CD4-positive, alpha-beta memory T cell (primary cell): ENCODE measurements at regions of chr10 and their contacts with region 1.

Region 1: DNA sequence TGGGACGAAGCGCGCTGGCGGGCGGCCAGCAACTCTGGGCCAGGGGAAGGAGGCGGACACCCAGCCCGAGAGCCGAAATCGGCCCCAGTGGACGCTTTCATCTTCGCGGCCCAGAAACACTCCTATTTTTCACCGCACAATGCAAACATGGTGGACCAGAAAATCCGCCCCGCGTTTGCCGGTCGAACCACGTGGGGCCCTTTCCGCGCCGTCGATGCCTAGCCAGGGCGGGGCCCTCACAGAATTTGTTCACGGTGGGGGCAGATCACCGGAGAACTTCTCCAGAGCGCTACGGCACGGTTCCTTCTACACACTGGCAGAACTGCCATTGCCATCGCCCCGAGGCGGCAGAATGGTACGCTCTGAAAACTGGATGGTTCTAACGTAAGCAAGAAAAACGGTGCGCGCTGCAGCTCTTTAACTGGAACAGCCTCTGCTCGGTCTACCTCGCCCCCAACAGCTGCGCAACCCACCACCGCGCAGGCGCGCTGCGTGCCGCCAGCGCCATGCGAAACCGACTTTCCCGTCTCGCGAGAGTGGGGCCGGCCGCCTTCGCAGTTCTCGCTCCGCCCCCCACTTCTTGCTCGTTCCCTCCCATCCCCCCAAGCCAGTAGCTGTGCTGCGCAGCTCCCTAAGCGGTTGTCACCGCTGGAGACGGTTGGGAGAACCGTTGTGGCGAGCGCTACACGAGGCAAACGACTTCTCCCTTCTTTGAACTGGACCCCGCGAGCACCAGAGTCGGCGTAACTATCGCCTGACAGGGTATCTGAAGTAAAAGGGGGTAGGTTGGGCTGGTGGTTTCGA is at the start of gene HNRNPH3:
- DNase-seq: peak; percentile 98 to 99 (median 99)
- H3K4me3 ChIP-seq: peak within 1 kb of the TSS; percentile 87 to 95
- H3K4me3 Mint-ChIP-seq: peak within 1 kb of the TSS; percentile 99 to 100 (median 100)
- H3K27ac ChIP-seq: peak within 1 kb of the TSS; percentile 96
- H3K27ac Mint-ChIP-seq: peak within 1 kb of the TSS; percentile 99 to 100 (median 100)
- H3K4me1 ChIP-seq: peaks cover 46% of the 10 kb centered on the region
- H3K4me1 Mint-ChIP-seq: peaks cover 30 to 70% (median 41%) of the 10 kb centered on the region in 4 donors
- H3K27me3 ChIP-seq: no peaks in the 10 kb centered on the region
- H3K27me3 Mint-ChIP-seq: no peaks in the 10 kb centered on the region
- total RNA-seq, gene HNRNPH3: 170 to 176 TPM

Region 2: DNA sequence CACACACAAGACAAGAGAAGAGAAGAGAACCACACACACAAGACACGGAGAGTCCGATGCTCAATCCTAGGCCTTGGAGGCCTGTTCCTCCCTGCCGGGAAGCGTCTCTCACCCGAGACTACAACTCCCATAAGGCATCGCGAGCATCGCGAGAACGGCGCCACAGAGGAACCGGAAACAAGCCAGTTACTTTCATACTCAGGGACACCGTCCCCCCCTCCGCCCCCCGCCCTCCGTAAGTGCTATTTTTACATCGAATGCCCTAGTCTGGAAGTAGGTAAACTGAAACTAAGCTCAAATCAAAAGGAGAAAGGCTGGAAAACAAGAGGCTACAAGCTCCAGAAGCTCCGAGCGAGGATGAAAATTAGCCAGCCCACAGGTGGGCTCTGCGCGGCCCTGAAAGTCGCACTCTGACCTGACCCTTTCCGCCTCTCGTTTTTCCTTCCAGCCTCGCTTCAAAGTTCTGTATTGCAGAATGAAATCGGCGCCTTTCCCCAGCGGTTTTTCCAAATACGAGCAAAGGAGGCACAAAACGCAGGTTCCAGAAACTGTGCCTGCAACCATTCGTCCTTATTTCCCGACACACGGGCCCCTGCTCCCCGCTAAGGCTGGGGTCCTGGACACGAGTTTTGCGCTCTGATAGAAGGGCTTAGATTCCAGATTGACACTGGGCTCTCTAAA is 482.2 kb before region 1 on chr10:
- CTCF ChIA-PET with region 1: no interaction called
- POLR2A ChIA-PET with region 1: interaction called, 20 read pairs
- intact Hi-C with region 1: loop called (anchors 1 kb)
- DNase-seq: peak; percentile 87 to 93 (median 90)
- H3K4me3 ChIP-seq: peak overlapping the region; percentile 70 to 98
- H3K4me3 Mint-ChIP-seq: peak overlapping the region; percentile 90 to 99 (median 96)
- H3K27ac ChIP-seq: peak overlapping the region; percentile 85
- H3K27ac Mint-ChIP-seq: peak overlapping the region; percentile 85 to 99 (median 97)
- H3K4me1 ChIP-seq: peaks cover 8% of the 10 kb centered on the region
- H3K4me1 Mint-ChIP-seq: peaks cover 2 to 17% (median 7%) of the 10 kb centered on the region in 4 donors
- H3K27me3 ChIP-seq: no peaks in the 10 kb centered on the region
- H3K27me3 Mint-ChIP-seq: no peaks in the 10 kb centered on the region

Region 3: GRCh38 chr10:68074775-68075549 is 256.7 kb before region 1 on chr10 and contains the start of gene HERC4:
- CTCF ChIA-PET with region 1: no interaction called
- POLR2A ChIA-PET with region 1: interaction called, 5 read pairs
- intact Hi-C with region 1: loop called (anchors 1 kb)
- DNase-seq: peak; percentile 88 to 92 (median 89)
- H3K4me3 ChIP-seq: peak within 1 kb of the TSS; percentile 53 to 99
- H3K4me3 Mint-ChIP-seq: peak within 1 kb of the TSS; percentile 95 to 99 (median 98)
- H3K27ac ChIP-seq: peak within 1 kb of the TSS; percentile 98
- H3K27ac Mint-ChIP-seq: peak within 1 kb of the TSS; percentile 91 to 98 (median 95)
- H3K4me1 ChIP-seq: peaks cover 39% of the 10 kb centered on the region
- H3K4me1 Mint-ChIP-seq: peaks cover 30 to 48% (median 39%) of the 10 kb centered on the region in 4 donors
- H3K27me3 ChIP-seq: no peaks in the 10 kb centered on the region
- H3K27me3 Mint-ChIP-seq: no peaks in the 10 kb centered on the region
- total RNA-seq, gene HERC4: 104 to 117 TPM

Region 4: GRCh38 chr10:68348265-68348741 is 16.6 kb after region 1 on chr10:
- CTCF ChIA-PET with region 1: interaction called, 39 read pairs
- POLR2A ChIA-PET with region 1: interaction called, 62 read pairs
- intact Hi-C with region 1: no loop called
- DNase-seq: peak; percentile 42 to 58 (median 49)
- H3K4me3 ChIP-seq: no peak overlapping the region
- H3K4me3 Mint-ChIP-seq: no peak overlapping the region
- H3K27ac ChIP-seq: no peak overlapping the region
- H3K27ac Mint-ChIP-seq: peak overlapping the region; percentile 4 to 85 (median 79)
- H3K4me1 ChIP-seq: no peaks in the 10 kb centered on the region
- H3K4me1 Mint-ChIP-seq: peaks cover 2 to 8% (median 5%) of the 10 kb centered on the region in 4 donors
- H3K27me3 ChIP-seq: no peaks in the 10 kb centered on the region
- H3K27me3 Mint-ChIP-seq: no peaks in the 10 kb centered on the region

Region 5: GRCh38 chr10:68419376-68419775 is 87.7 kb after region 1 on chr10:
- CTCF ChIA-PET with region 1: no interaction called
- POLR2A ChIA-PET with region 1: no interaction called
- intact Hi-C with region 1: no loop called
- DNase-seq: no peak
- H3K4me3 ChIP-seq: no peak overlapping the region
- H3K4me3 Mint-ChIP-seq: no peak overlapping the region
- H3K27ac ChIP-seq: no peak overlapping the region
- H3K27ac Mint-ChIP-seq: no peak overlapping the region
- H3K4me1 ChIP-seq: peaks cover 8% of the 10 kb centered on the region
- H3K4me1 Mint-ChIP-seq: peaks cover 7 to 10% (median 8%) of the 10 kb centered on the region in 4 donors
- H3K27me3 ChIP-seq: no peaks in the 10 kb centered on the region
- H3K27me3 Mint-ChIP-seq: no peaks in the 10 kb centered on the region

Region 6: GRCh38 chr10:68526626-68527307 is 195.1 kb after region 1 on chr10:
- CTCF ChIA-PET with region 1: no interaction called
- POLR2A ChIA-PET with region 1: no interaction called
- intact Hi-C with region 1: loop called (anchors 2 kb)
- DNase-seq: peak in 1 of 5 donors; percentile 1
- H3K4me3 ChIP-seq: peak overlapping the region; percentile 93
- H3K4me3 Mint-ChIP-seq: peak overlapping the region; percentile 84 to 94 (median 90)
- H3K27ac ChIP-seq: peak overlapping the region; percentile 94
- H3K27ac Mint-ChIP-seq: peak overlapping the region; percentile 82 to 98 (median 97)
- H3K4me1 ChIP-seq: peaks cover 8% of the 10 kb centered on the region
- H3K4me1 Mint-ChIP-seq: peaks cover 5 to 13% (median 7%) of the 10 kb centered on the region in 4 donors
- H3K27me3 ChIP-seq: no peaks in the 10 kb centered on the region
- H3K27me3 Mint-ChIP-seq: no peaks in the 10 kb centered on the region

Region 7: DNA sequence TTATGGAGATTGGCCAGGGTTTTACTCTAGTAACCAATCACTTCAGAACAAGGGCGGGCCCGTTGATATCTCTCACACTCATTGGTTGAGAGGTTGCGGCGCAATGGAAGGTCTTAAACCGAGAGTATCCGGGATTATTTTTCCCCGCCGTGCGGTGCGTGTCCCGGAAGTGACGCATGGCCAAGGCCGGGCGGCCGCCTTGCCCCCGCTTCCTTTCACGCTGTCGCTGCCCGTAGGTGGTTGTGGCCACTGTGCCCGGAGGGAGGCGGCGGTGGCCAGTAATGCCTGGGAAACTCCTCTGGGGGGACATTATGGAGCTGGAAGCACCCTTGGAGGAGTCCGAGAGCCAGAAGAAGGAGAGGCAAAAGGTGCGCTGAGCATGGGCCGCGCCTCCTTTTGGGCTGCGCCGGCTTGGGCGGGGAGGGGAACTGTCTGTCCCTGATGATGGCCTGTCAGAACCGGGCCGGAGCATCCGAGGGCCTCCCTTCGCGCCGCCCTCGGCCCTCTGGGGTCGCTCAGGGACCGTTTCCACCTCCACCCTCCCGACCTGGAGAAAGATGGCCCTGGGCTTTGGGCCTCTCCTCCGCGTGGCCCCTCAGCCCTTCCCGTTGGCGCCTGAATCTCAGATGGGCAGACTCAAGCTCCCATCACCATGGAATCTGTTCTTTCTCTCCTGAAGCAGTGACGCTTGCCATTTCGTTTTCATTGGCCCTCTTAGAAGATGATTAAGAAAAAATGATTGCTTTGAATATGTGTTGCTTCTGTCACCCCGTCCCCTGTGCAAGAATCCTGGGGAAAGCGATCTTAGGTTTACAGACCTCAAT is 569.7 kb after region 1 on chr10 and contains the start of gene DDX50:
- CTCF ChIA-PET with region 1: no interaction called
- POLR2A ChIA-PET with region 1: interaction called, 5 read pairs
- intact Hi-C with region 1: loop called (anchors 5 kb)
- DNase-seq: peak; percentile 94 to 98 (median 96)
- H3K4me3 ChIP-seq: peak within 1 kb of the TSS; percentile 58 to 85
- H3K4me3 Mint-ChIP-seq: peak within 1 kb of the TSS; percentile 97 to 99 (median 98)
- H3K27ac ChIP-seq: peak within 1 kb of the TSS; percentile 97
- H3K27ac Mint-ChIP-seq: peak within 1 kb of the TSS; percentile 99 to 100 (median 99)
- H3K4me1 ChIP-seq: peaks cover 37% of the 10 kb centered on the region
- H3K4me1 Mint-ChIP-seq: peaks cover 25 to 61% (median 40%) of the 10 kb centered on the region in 4 donors
- H3K27me3 ChIP-seq: no peaks in the 10 kb centered on the region
- H3K27me3 Mint-ChIP-seq: no peaks in the 10 kb centered on the region
- total RNA-seq, gene DDX50: 41.1 to 41.9 TPM